AG04449 (cell line): ENCODE measurements at regions of chr15 and their contacts with region 1.

Region 1: GRCh38 chr15:63945007-63945788 is 101.1 kb downstream of the DAPK2 start:
- DNase-seq: no peak
- H3K4me3 ChIP-seq: no peak overlapping the region
- CTCF ChIP-seq: peak; percentile 82

Region 2: GRCh38 chr15:63915873-63916771 is 29.1 kb before region 1 on chr15:
- CTCF ChIA-PET with region 1: interaction called, 57 read pairs
- POLR2A ChIA-PET with region 1: no interaction called
- DNase-seq: no peak
- H3K4me3 ChIP-seq: no peak overlapping the region
- CTCF ChIP-seq: peak; percentile 65

Region 3: DNA sequence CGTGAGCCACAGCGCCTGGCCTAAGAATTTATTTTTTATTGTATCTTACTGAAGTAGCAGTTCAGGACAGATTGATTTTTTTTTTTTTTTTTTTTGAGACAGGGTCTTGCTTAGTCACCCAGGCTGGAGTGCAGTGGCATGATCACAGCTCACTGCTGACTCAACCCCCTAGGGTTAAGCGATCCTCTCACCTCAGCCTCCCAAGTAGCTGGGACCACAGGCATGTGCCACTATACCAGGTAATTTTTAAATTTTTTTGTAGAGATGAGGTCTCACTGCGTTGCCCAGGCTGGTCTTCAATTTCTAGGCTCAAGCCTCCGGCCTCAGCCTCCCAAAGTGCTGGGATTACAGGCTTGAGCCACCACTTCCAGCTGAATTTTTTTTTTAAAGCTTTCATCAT is 11.7 kb before region 1 on chr15:
- CTCF ChIA-PET with region 1: interaction called, 76 read pairs
- POLR2A ChIA-PET with region 1: no interaction called
- DNase-seq: no peak
- H3K4me3 ChIP-seq: no peak overlapping the region
- CTCF ChIP-seq: no peak

Region 4: DNA sequence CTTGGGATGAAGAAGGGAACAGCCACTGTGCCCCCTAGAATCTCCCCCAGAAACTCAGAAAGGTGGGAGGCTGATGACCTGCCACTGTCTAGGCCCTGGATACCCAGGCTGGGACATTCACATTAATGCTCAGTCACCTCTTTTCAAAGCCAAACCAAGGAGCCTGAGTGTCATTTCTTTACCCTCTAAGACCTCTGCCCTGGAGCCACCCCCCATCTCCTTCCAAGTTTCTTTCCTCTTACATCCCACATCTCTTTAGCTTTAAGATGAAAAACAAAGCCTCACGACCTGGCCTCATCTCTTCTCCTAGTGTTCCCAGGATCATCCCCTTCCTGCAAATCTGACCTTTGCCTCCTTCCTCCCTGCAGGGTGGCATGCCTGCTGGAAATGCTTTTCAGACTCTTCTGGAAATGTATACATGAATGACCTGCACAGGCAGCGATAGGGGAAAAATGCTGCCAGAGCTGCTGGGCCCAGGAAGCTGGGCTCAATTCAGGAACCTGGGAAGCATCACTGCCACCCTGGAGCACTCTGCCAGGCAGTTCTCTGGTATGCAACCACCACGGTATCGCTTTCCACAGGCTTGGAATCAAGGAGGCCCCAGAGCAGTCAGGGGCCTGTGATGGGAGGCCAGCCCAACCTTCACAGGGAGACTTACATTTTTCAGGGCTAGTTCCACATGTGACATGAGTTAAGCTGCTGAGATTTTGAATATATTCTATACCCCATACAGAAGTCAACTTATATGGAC is 33.5 kb after region 1 on chr15:
- CTCF ChIA-PET with region 1: interaction called, 20 read pairs
- POLR2A ChIA-PET with region 1: no interaction called
- DNase-seq: no peak
- H3K4me3 ChIP-seq: no peak overlapping the region
- CTCF ChIP-seq: no peak

Region 5: GRCh38 chr15:64046347-64047153 is 101.4 kb after region 1 on chr15 and contains the start of gene DAPK2:
- CTCF ChIA-PET with region 1: interaction called, 12 read pairs
- POLR2A ChIA-PET with region 1: no interaction called
- DNase-seq: no peak
- H3K4me3 ChIP-seq: peak within 1 kb of the TSS; percentile 60
- CTCF ChIP-seq: peak; percentile 71